Adrenal gland (tissue), 19 donors: ENCODE measurements at regions of chr7 and their contacts with region 1.

Region 1: GRCh38 chr7:156969972-156970420 is 20.5 kb downstream of the NOM1 start:
- DNase-seq: no peak
- H3K4me3 ChIP-seq: no peak overlapping the region
- H3K27ac ChIP-seq: no peak overlapping the region
- H3K4me1 ChIP-seq: no peaks in the 10 kb centered on the region
- H3K27me3 ChIP-seq: no peaks in the 10 kb centered on the region
- CTCF ChIP-seq: peak; percentile 16 to 51 (median 36)
- POLR2A ChIP-seq: no peak

Region 2: DNA sequence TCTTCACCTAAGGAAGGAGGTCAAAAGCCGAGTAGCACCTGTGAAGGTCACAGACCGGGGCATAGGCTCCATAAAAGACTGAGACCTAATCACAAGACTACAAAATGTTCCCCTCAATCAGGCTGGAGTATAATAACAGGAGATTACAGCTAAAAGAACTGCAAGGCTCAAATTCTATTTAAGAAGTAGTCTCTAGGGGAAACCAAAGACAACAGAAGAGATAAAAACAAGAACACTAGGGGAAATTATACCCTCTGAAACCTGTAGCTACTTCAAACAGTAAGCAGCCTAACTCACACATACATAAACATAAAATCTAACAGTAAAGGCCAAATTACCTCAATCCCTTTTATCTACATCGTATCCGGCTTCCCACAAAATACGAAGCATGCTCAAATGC is 115.3 kb before region 1 on chr7:
- intact Hi-C with region 1: no loop called
- DNase-seq: no peak
- H3K4me3 ChIP-seq: no peak overlapping the region
- H3K27ac ChIP-seq: no peak overlapping the region
- H3K4me1 ChIP-seq: peaks cover 0 to 8% of the 10 kb centered on the region in 2 donors
- H3K27me3 ChIP-seq: no peaks in the 10 kb centered on the region
- CTCF ChIP-seq: no peak
- POLR2A ChIP-seq: no peak

Region 3: GRCh38 chr7:156903232-156903909 is 66.6 kb before region 1 on chr7:
- intact Hi-C with region 1: no loop called
- DNase-seq: peak; percentile 55 to 84 (median 81)
- H3K4me3 ChIP-seq: no peak overlapping the region
- H3K27ac ChIP-seq: peak overlapping the region in 2 of 5 donors; percentile 17 to 70
- H3K4me1 ChIP-seq: peaks cover 4 to 5% of the 10 kb centered on the region in 2 donors
- H3K27me3 ChIP-seq: no peaks in the 10 kb centered on the region
- CTCF ChIP-seq: no peak
- POLR2A ChIP-seq: no peak

Region 4: DNA sequence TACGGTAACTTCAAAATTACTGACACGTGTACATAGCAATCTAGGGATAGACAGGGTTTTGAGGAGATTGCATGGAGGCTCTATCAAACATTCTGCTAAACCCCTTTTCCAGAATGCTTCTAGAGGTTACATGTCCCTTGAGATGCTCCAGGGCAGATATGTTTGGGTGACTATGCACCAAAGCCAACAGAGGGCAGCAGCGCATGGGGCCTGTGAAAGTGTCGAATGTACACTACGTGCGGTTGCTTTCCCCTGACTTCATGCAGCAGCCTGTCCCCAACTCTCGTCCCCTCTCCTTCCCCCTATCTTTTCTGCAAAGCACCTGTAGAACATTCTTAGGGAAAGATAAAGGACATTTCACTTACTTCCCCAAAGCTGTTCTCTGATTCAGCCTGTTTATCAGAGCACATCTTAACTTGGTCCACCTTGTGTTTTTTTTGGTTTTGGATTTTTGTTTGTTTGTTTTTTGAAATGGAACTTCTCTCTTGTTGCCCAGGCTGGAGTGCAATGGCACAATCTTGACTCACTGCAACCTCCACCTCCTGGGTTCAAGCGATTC is 258.9 kb after region 1 on chr7:
- intact Hi-C with region 1: loop called (anchors 10 kb)
- DNase-seq: peak in 2 of 7 donors; percentile 13 to 26
- H3K4me3 ChIP-seq: no peak overlapping the region
- H3K27ac ChIP-seq: no peak overlapping the region
- H3K4me1 ChIP-seq: no peaks in the 10 kb centered on the region
- H3K27me3 ChIP-seq: no peaks in the 10 kb centered on the region
- CTCF ChIP-seq: peak in 3 of 6 experiments; percentile 11 to 26 (median 19)
- POLR2A ChIP-seq: no peak

Region 5: DNA sequence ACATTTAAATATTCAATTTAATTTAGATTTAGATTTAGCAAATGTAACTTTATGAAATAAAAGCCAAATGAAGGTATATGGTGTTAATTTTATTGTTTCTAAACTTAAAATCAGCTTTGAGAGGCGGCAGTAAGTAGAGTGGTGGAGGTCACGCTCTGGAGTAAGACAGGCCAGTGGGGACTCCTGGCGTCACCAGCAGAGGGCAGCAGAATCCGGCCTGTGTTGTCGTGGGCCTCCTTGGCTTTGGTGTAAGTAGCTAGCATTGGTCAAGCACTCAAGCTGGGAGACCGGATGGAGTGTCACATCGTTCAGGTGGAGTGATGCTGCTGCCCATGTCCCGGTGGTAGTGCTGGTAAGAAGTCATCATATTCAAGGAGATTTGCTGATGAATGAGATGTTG is 268.1 kb after region 1 on chr7:
- intact Hi-C with region 1: loop called in 1 of 2 experiments (anchors 10 kb)
- DNase-seq: no peak
- H3K4me3 ChIP-seq: no peak overlapping the region
- H3K27ac ChIP-seq: no peak overlapping the region
- H3K4me1 ChIP-seq: no peaks in the 10 kb centered on the region
- H3K27me3 ChIP-seq: no peaks in the 10 kb centered on the region
- CTCF ChIP-seq: no peak
- POLR2A ChIP-seq: no peak